Activated CD4-positive, alpha-beta memory T cell treated with anti-CD3 and anti-CD28 coated beads for 36 hours (primary cell): ENCODE measurements at regions of chr20 and their contacts with region 1.

Region 1: GRCh38 chr20:34704177-34705007 is at the start of gene TP53INP2:
- DNase-seq: peak; percentile 89
- H3K4me3 Mint-ChIP-seq: peak within 1 kb of the TSS; percentile 82
- H3K27ac Mint-ChIP-seq: peak within 1 kb of the TSS; percentile 63
- H3K4me1 Mint-ChIP-seq: peaks cover 17% of the 10 kb centered on the region
- H3K27me3 Mint-ChIP-seq: no peaks in the 10 kb centered on the region
- total RNA-seq, gene TP53INP2: 2.3 to 2.5 TPM

Region 2: DNA sequence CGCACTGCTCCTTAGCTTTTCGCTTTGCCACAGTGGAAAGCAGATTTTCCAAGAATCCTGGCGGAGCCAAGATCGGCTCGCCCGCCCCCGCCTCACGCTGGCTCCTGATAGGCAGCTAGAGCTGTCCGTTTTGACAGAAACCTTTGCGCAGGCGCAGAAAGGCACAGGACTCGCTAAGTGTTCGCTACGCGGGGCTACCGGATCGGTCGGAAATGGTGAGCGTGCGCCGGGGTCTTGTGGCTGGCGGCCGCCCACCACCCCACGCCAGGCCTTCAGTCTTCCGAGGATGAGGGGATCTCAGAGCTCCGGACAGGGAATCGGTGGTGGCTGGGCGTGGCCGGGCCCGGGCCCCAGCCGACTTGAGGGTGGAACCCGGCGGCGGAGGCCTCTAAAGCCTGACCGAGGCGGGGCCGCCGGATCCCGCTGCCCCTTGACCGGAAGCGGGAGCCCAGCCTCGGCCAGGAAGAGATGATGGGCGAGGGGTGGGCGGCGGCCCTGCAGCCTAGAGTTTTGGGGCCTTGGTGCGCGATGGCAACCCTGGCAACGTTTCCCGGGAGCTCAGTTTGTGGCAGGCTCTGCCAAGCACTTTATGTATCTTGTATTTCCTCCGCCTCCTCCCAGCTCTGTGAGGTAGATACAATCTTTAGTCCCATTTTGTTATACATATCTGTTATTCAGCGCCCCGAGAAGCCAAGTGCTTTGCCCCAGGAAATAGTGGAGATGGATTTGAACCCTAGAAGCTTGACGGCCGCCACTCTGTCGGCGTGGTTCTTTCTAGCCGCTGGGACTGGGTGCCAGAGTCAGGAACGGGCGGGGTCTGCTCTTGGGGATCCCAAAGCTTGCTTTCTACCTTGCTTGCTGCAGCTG is 187.9 kb before region 1 on chr20 and contains the start of gene DYNLRB1:
- CTCF ChIA-PET with region 1: interaction called, 4 read pairs
- POLR2A ChIA-PET with region 1: interaction called, 5 read pairs
- intact Hi-C with region 1: loop called (anchors 1 kb)
- DNase-seq: peak; percentile 96
- H3K4me3 Mint-ChIP-seq: peak within 1 kb of the TSS; percentile 98
- H3K27ac Mint-ChIP-seq: peak within 1 kb of the TSS; percentile 92
- H3K4me1 Mint-ChIP-seq: peaks cover 34% of the 10 kb centered on the region
- H3K27me3 Mint-ChIP-seq: no peaks in the 10 kb centered on the region
- total RNA-seq, gene DYNLRB1: 101 to 108 TPM

Region 3: GRCh38 chr20:34558320-34559218 is 145.8 kb before region 1 on chr20 and contains the start of gene MAP1LC3A:
- CTCF ChIA-PET with region 1: interaction called, 6 read pairs
- POLR2A ChIA-PET with region 1: no interaction called
- intact Hi-C with region 1: loop called (anchors 1 kb)
- DNase-seq: peak; percentile 95
- H3K4me3 Mint-ChIP-seq: peak within 1 kb of the TSS; percentile 83
- H3K27ac Mint-ChIP-seq: peak within 1 kb of the TSS; percentile 80
- H3K4me1 Mint-ChIP-seq: peaks cover 16% of the 10 kb centered on the region
- H3K27me3 Mint-ChIP-seq: no peaks in the 10 kb centered on the region
- total RNA-seq, gene MAP1LC3A: 4.6 to 5.6 TPM

Region 4: GRCh38 chr20:34676642-34677373 is 27.6 kb before region 1 on chr20 and contains the start of gene PIGU:
- CTCF ChIA-PET with region 1: interaction called, 5 read pairs
- POLR2A ChIA-PET with region 1: interaction called, 4 read pairs
- intact Hi-C with region 1: loop called (anchors 1 kb)
- DNase-seq: peak; percentile 97
- H3K4me3 Mint-ChIP-seq: peak within 1 kb of the TSS; percentile 94
- H3K27ac Mint-ChIP-seq: peak within 1 kb of the TSS; percentile 93
- H3K4me1 Mint-ChIP-seq: peaks cover 28% of the 10 kb centered on the region
- H3K27me3 Mint-ChIP-seq: no peaks in the 10 kb centered on the region
- total RNA-seq, gene PIGU: 19.0 to 21.3 TPM

Region 5: GRCh38 chr20:34768096-34768495 is 63.7 kb after region 1 on chr20:
- CTCF ChIA-PET with region 1: interaction called, 10 read pairs
- POLR2A ChIA-PET with region 1: no interaction called
- intact Hi-C with region 1: no loop called
- DNase-seq: no peak
- H3K4me3 Mint-ChIP-seq: no peak overlapping the region
- H3K27ac Mint-ChIP-seq: no peak overlapping the region
- H3K4me1 Mint-ChIP-seq: no peaks in the 10 kb centered on the region
- H3K27me3 Mint-ChIP-seq: no peaks in the 10 kb centered on the region